ENCODE measurements at regions of chr6 and their contacts with region 1.

Region 1: GRCh38 chr6:117555882-117556498 is 46.3 kb downstream of the GOPC start:
- DNase-seq: peak in 2 of 5 donors; percentile 33 to 35
- ATAC-seq: peak in 1 of 4 donors; percentile 28
- H3K4me3 ChIP-seq: no peak overlapping the region
- H3K27ac ChIP-seq: no peak overlapping the region
- H3K4me1 ChIP-seq: peaks cover 0 to 8% (median 0%) of the 10 kb centered on the region in 12 donors
- H3K27me3 ChIP-seq: no peaks in the 10 kb centered on the region
- CTCF ChIP-seq: peak; percentile 74 to 97 (median 91)
- POLR2A ChIP-seq: no peak

Region 2: DNA sequence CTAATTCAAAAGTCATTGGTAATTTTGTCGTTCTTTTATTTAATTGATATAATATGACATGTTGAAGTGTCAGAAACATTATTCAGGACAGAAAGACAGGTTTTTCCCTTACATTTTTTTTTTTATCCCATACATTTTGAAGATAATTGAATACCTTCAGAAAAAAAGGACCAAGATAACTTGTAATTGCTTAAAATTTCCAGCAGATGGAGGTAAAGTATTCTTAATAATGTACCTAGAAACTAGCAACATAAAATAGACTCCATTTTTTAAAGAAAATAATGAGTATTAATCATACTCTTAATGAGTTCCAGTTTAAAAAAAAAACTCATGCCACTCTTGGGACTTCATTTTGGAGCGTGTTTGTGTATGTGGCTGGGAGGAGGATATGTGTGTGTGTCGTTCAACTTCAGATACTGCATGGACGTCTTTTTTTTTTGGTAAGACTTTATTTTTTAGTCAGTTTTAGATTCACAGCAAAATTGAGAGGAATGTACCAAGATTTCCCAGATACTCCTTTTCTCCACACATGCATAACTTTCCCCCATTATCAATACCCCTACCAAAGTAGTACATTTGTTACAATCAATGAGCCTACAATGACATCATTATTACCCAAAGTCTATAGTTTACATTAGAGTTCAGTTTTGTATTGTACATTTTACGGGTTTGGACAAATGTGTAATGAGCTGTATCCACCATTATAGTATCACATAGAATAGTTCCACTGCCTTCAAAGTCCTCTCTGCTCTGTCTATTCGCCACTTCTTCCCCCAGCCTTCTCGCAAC is 209.7 kb before region 1 on chr6:
- intact Hi-C with region 1: loop called (anchors 2 to 10 kb)
- DNase-seq: no peak
- ATAC-seq: no peak
- H3K4me3 ChIP-seq: peak overlapping the region in 3 of 12 donors; percentile 21 to 31 (median 27)
- H3K27ac ChIP-seq: no peak overlapping the region
- H3K4me1 ChIP-seq: no peaks in the 10 kb centered on the region
- H3K27me3 ChIP-seq: peaks cover 0 to 3% (median 0%) of the 10 kb centered on the region in 9 donors
- CTCF ChIP-seq: peak; percentile 30 to 66 (median 54)
- POLR2A ChIP-seq: no peak

Region 3: DNA sequence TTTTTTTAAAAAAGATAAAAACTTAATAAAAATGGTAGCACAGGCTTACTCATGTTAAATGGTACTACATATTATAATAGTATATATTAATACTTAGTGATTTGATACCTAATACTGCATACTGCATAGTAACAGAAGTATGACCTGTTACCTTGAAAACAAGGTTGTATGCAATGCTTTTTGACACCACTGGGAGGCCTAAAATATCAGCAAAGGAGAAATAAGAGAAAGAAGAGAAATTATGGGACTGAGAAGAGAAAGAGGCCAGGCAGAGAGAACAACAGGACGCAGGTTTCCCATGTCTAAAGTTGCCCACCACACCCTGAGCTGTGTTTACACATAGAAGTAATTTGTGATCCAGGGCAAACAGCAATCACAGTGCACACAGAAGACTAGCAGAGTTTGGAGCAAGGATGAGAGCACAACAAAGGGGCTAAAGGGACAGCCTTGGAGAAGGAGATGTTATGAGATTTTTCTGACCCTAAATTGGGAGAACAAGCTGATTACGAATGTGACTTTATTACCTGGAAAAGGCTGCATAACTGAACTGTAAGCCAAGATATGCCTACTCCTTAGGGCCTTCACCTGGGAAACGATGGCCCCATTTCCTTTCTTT is 203.4 kb before region 1 on chr6:
- intact Hi-C with region 1: loop called in 9 of 10 experiments (anchors 2 to 10 kb)
- DNase-seq: no peak
- ATAC-seq: no peak
- H3K4me3 ChIP-seq: no peak overlapping the region
- H3K27ac ChIP-seq: no peak overlapping the region
- H3K4me1 ChIP-seq: no peaks in the 10 kb centered on the region
- H3K27me3 ChIP-seq: no peaks in the 10 kb centered on the region
- CTCF ChIP-seq: peak in 9 of 12 donors; percentile 11 to 50 (median 23)
- POLR2A ChIP-seq: no peak

Region 4: GRCh38 chr6:117521791-117522502 is 34.0 kb before region 1 on chr6:
- intact Hi-C with region 1: no loop called
- DNase-seq: no peak
- ATAC-seq: no peak
- H3K4me3 ChIP-seq: no peak overlapping the region
- H3K27ac ChIP-seq: no peak overlapping the region
- H3K4me1 ChIP-seq: no peaks in the 10 kb centered on the region
- H3K27me3 ChIP-seq: no peaks in the 10 kb centered on the region
- CTCF ChIP-seq: no peak
- POLR2A ChIP-seq: no peak

Region 5: DNA sequence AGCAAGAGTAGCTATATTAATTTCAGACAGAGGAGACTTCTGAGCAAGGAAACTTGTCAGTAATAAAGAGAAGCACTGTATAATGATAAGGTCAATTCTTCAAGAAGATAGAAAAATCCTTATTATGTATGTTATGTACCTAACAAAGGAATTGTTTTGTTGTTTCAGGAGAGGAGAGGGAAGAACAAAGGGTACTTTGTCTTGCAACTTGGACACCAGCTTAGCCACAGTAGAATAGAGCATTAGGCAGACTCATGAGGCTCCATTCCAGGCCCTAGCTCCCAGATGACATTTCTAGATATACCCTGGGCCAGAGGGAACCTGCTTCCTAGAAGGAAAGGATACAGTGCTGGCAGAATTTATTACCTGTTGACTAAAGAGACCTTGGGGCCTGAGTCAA is 112.7 kb after region 1 on chr6:
- intact Hi-C with region 1: no loop called
- DNase-seq: no peak
- ATAC-seq: no peak
- H3K4me3 ChIP-seq: no peak overlapping the region
- H3K27ac ChIP-seq: no peak overlapping the region
- H3K4me1 ChIP-seq: no peaks in the 10 kb centered on the region
- H3K27me3 ChIP-seq: no peaks in the 10 kb centered on the region
- CTCF ChIP-seq: no peak
- POLR2A ChIP-seq: no peak

Region 6: DNA sequence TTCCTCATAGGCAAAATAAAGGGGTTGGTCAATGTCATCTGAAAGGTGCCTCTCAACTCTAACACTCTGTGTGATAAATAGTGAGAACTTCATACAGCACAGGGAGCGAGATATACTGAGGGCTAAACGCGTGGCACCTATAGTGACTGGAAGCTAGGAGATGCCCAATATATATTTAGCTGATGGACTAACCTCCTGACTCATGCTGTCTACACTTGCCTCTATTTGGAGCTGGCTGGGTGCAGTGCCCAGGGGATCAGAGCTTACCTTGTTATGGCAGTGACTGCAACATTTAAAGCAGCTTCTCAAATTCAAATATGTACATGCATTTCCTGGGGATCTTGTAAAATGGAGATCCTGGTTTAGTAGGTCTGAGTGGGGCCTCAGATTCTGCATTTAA is 880.5 kb after region 1 on chr6:
- intact Hi-C with region 1: no loop called
- DNase-seq: no peak
- ATAC-seq: no peak
- H3K4me3 ChIP-seq: no peak overlapping the region
- H3K27ac ChIP-seq: no peak overlapping the region
- H3K4me1 ChIP-seq: no peaks in the 10 kb centered on the region
- H3K27me3 ChIP-seq: no peaks in the 10 kb centered on the region
- CTCF ChIP-seq: no peak
- POLR2A ChIP-seq: no peak